B cell (primary cell): ENCODE measurements at regions of chr20 and their contacts with region 1.

Region 1: GRCh38 chr20:45450097-45450818 is 19.3 kb upstream of the WFDC2 start:
- DNase-seq: peak; percentile 75
- ATAC-seq: peak; percentile 57
- H3K4me3 ChIP-seq: no peak overlapping the region
- H3K4me3 Mint-ChIP-seq: no peak overlapping the region
- H3K27ac ChIP-seq: no peak overlapping the region
- H3K27ac Mint-ChIP-seq: no peak overlapping the region
- H3K4me1 ChIP-seq: peaks cover 12 to 16% of the 10 kb centered on the region in 2 donors
- H3K4me1 Mint-ChIP-seq: peaks cover 17% of the 10 kb centered on the region
- H3K27me3 ChIP-seq: peaks cover 0 to 5% (median 0%) of the 10 kb centered on the region in 4 experiments
- H3K27me3 Mint-ChIP-seq: peaks cover 6% of the 10 kb centered on the region
- CTCF ChIP-seq: peak; percentile 75

Region 2: DNA sequence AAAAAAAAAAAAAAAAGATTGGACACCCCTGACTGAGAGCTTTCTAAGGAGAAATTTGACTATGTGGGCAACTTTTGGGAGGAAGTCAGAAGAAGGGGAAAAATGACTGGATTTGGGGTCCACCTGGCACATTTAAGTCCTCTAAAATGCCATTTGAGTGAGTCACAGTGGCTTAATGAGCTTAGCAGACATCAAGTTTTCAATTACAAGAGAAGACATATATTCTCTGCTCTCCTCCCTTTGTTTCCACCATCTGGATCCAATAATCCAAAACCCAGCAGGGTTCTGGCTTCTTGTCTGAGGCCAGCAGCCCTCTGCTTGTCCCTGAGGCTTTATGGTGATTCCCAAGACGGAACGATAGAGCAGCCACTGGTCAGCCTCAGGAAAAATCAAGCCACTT is 268.6 kb before region 1 on chr20:
- CTCF ChIA-PET with region 1: no interaction called
- POLR2A ChIA-PET with region 1: no interaction called
- intact Hi-C with region 1: no loop called
- DNase-seq: no peak
- ATAC-seq: no peak
- H3K4me3 ChIP-seq: no peak overlapping the region
- H3K4me3 Mint-ChIP-seq: no peak overlapping the region
- H3K27ac ChIP-seq: no peak overlapping the region
- H3K27ac Mint-ChIP-seq: no peak overlapping the region
- H3K4me1 ChIP-seq: no peaks in the 10 kb centered on the region
- H3K4me1 Mint-ChIP-seq: no peaks in the 10 kb centered on the region
- H3K27me3 ChIP-seq: peaks cover 0 to 11% (median 0%) of the 10 kb centered on the region in 4 experiments
- H3K27me3 Mint-ChIP-seq: peaks cover 15% of the 10 kb centered on the region
- CTCF ChIP-seq: no peak

Region 3: GRCh38 chr20:45322952-45323383 is 127.3 kb before region 1 on chr20:
- CTCF ChIA-PET with region 1: interaction called, 35 read pairs
- POLR2A ChIA-PET with region 1: no interaction called
- intact Hi-C with region 1: no loop called
- DNase-seq: peak; percentile 70
- ATAC-seq: peak; percentile 23
- H3K4me3 ChIP-seq: no peak overlapping the region
- H3K4me3 Mint-ChIP-seq: no peak overlapping the region
- H3K27ac ChIP-seq: no peak overlapping the region
- H3K27ac Mint-ChIP-seq: peak overlapping the region; percentile 15
- H3K4me1 ChIP-seq: peaks cover 28 to 41% of the 10 kb centered on the region in 2 donors
- H3K4me1 Mint-ChIP-seq: peaks cover 23% of the 10 kb centered on the region
- H3K27me3 ChIP-seq: peaks cover 0 to 3% (median 0%) of the 10 kb centered on the region in 4 experiments
- H3K27me3 Mint-ChIP-seq: no peaks in the 10 kb centered on the region
- CTCF ChIP-seq: no peak

Region 4: GRCh38 chr20:45362804-45363610 is 87.3 kb before region 1 on chr20 and contains the start of gene SYS1:
- CTCF ChIA-PET with region 1: interaction called, 79 read pairs
- POLR2A ChIA-PET with region 1: no interaction called
- intact Hi-C with region 1: loop called (anchors 1 kb)
- DNase-seq: peak; percentile 99
- ATAC-seq: peak; percentile 82
- H3K4me3 ChIP-seq: peak within 1 kb of the TSS; percentile 79 to 88 (median 85)
- H3K4me3 Mint-ChIP-seq: peak within 1 kb of the TSS; percentile 99
- H3K27ac ChIP-seq: peak within 1 kb of the TSS; percentile 86 to 99
- H3K27ac Mint-ChIP-seq: peak within 1 kb of the TSS; percentile 99
- H3K4me1 ChIP-seq: peaks cover 47 to 49% of the 10 kb centered on the region in 2 donors
- H3K4me1 Mint-ChIP-seq: peaks cover 49% of the 10 kb centered on the region
- H3K27me3 ChIP-seq: peaks cover 0 to 5% (median 0%) of the 10 kb centered on the region in 4 experiments
- H3K27me3 Mint-ChIP-seq: no peaks in the 10 kb centered on the region
- CTCF ChIP-seq: peak; percentile 86
- total RNA-seq, gene SYS1: 57.7 and 61.4 TPM in 2 replicates

Region 5: DNA sequence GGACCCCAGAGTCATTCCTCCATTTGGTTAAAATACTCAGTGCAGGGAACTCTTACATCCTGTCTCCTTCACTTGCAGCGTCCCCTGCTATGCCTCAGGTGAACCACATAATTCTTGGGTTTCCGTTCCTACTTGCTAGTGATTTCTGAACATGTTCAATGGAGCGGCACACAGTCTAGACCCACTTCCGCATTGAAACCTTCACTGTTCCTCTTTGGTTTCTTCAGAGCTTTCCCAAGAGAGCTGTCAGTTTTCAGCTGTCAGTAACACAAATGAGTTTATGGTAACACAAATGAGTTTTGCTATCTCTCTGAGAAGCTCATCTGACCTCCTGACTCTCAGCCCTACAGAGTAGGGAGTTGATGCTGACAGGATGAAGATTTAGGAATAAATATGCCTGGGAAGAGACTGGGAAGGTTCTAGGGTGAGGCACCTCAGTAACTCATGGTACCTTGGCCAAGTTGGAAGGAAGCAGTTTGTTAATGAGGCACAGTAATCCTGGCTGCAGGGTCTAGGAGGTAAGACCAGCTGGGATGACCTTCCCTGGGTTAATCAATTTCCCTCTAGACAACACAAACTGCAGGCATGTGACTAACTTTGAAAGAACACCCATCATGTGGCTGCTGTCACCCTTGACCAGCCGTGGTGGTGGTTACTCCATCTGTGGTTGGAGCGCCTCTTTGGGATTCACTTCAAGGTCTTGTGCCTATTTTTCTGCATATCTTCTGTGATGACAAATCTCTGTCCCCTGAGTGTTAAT is 81.9 kb before region 1 on chr20:
- CTCF ChIA-PET with region 1: interaction called, 79 read pairs
- POLR2A ChIA-PET with region 1: no interaction called
- intact Hi-C with region 1: loop called (anchors 1 kb)
- DNase-seq: peak; percentile 94
- ATAC-seq: peak; percentile 80
- H3K4me3 ChIP-seq: peak overlapping the region in 3 of 5 experiments; percentile 15 to 46 (median 18)
- H3K4me3 Mint-ChIP-seq: peak overlapping the region; percentile 86
- H3K27ac ChIP-seq: peak overlapping the region; percentile 43 to 94
- H3K27ac Mint-ChIP-seq: peak overlapping the region; percentile 92
- H3K4me1 ChIP-seq: peaks cover 95 to 98% of the 10 kb centered on the region in 2 donors
- H3K4me1 Mint-ChIP-seq: peaks cover 86% of the 10 kb centered on the region
- H3K27me3 ChIP-seq: no peaks in the 10 kb centered on the region
- H3K27me3 Mint-ChIP-seq: no peaks in the 10 kb centered on the region
- CTCF ChIP-seq: peak; percentile 28

Region 6: GRCh38 chr20:45465491-45466266 is 15.4 kb after region 1 on chr20:
- CTCF ChIA-PET with region 1: interaction called, 20 read pairs
- POLR2A ChIA-PET with region 1: no interaction called
- intact Hi-C with region 1: no loop called
- DNase-seq: no peak
- ATAC-seq: no peak
- H3K4me3 ChIP-seq: no peak overlapping the region
- H3K4me3 Mint-ChIP-seq: no peak overlapping the region
- H3K27ac ChIP-seq: no peak overlapping the region
- H3K27ac Mint-ChIP-seq: no peak overlapping the region
- H3K4me1 ChIP-seq: peaks cover 12 to 14% of the 10 kb centered on the region in 2 donors
- H3K4me1 Mint-ChIP-seq: peaks cover 10% of the 10 kb centered on the region
- H3K27me3 ChIP-seq: peaks cover 0 to 40% (median 19%) of the 10 kb centered on the region in 4 experiments
- H3K27me3 Mint-ChIP-seq: peaks cover 37% of the 10 kb centered on the region
- CTCF ChIP-seq: no peak

Region 7: GRCh38 chr20:46051556-46052308 is 601.5 kb after region 1 on chr20:
- CTCF ChIA-PET with region 1: no interaction called
- POLR2A ChIA-PET with region 1: no interaction called
- intact Hi-C with region 1: no loop called
- DNase-seq: no peak
- ATAC-seq: no peak
- H3K4me3 ChIP-seq: no peak overlapping the region
- H3K4me3 Mint-ChIP-seq: no peak overlapping the region
- H3K27ac ChIP-seq: no peak overlapping the region
- H3K27ac Mint-ChIP-seq: no peak overlapping the region
- H3K4me1 ChIP-seq: no peaks in the 10 kb centered on the region
- H3K4me1 Mint-ChIP-seq: peaks cover 2% of the 10 kb centered on the region
- H3K27me3 ChIP-seq: peaks cover 0 to 20% (median 3%) of the 10 kb centered on the region in 4 experiments
- H3K27me3 Mint-ChIP-seq: peaks cover 41% of the 10 kb centered on the region
- CTCF ChIP-seq: no peak